PC-9 (cell line): ENCODE measurements at regions of chr1 and their contacts with region 1.

Region 1: DNA sequence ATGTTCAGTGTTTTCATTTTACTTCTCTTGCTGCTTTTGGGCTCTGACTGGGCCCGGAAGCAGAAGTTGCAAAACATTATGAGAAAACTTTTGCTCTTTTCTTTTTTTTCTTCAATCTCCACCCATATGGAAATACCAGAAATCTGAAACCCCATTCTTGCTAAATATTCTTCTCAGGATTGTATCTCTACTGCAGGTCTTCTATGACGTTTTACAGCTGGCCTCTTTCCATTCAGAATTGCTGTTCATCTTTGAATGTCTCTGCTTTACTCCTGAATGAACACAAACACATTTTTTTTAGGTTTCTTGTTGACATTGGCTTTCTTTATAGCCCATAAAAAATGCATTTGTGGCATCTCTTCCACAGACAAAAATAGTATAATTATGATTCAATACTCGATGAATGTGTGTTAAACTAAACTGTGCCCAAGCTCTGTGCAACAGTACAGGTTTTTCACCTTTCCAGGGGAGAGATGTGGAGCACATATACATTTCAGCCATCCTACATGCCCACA is 18.8 kb downstream of the PTPRC start:
- DNase-seq: peak; percentile 45 to 93
- H3K4me3 ChIP-seq: no peak overlapping the region
- H3K27ac ChIP-seq: peak overlapping the region; percentile 70
- H3K4me1 ChIP-seq: peaks cover 28% of the 10 kb centered on the region
- H3K27me3 ChIP-seq: no peaks in the 10 kb centered on the region
- CTCF ChIP-seq: no peak

Region 2: GRCh38 chr1:197948926-197949899 is 708.4 kb before region 1 on chr1:
- CTCF ChIA-PET with region 1: no interaction called
- POLR2A ChIA-PET with region 1: no interaction called
- intact Hi-C with region 1: no loop called
- DNase-seq: no peak
- H3K4me3 ChIP-seq: no peak overlapping the region
- H3K27ac ChIP-seq: no peak overlapping the region
- H3K4me1 ChIP-seq: no peaks in the 10 kb centered on the region
- H3K27me3 ChIP-seq: no peaks in the 10 kb centered on the region
- CTCF ChIP-seq: no peak

Region 3: GRCh38 chr1:198253668-198254067 is 403.9 kb before region 1 on chr1:
- CTCF ChIA-PET with region 1: no interaction called
- POLR2A ChIA-PET with region 1: interaction called, 13 read pairs
- intact Hi-C with region 1: no loop called
- DNase-seq: no peak
- H3K4me3 ChIP-seq: no peak overlapping the region
- H3K27ac ChIP-seq: no peak overlapping the region; the same call in 1 of the 2 replicates
- H3K4me1 ChIP-seq: no peaks in the 10 kb centered on the region
- H3K27me3 ChIP-seq: no peaks in the 10 kb centered on the region
- CTCF ChIP-seq: no peak

Region 4: GRCh38 chr1:198497346-198498102 is 160.1 kb before region 1 on chr1:
- CTCF ChIA-PET with region 1: no interaction called
- POLR2A ChIA-PET with region 1: interaction called, 4 read pairs
- intact Hi-C with region 1: loop called (anchors 1 kb)
- DNase-seq: no peak
- H3K4me3 ChIP-seq: no peak overlapping the region
- H3K27ac ChIP-seq: 0 out of 2 replicates have a peak overlapping the region, but pooled peaks have one; percentile 10
- H3K4me1 ChIP-seq: peaks cover 41% of the 10 kb centered on the region
- H3K27me3 ChIP-seq: no peaks in the 10 kb centered on the region
- CTCF ChIP-seq: no peak

Region 5: GRCh38 chr1:198606020-198606438 is 51.6 kb before region 1 on chr1:
- CTCF ChIA-PET with region 1: no interaction called
- POLR2A ChIA-PET with region 1: interaction called, 9 read pairs
- intact Hi-C with region 1: loop called (anchors 5 kb)
- DNase-seq: no peak
- H3K4me3 ChIP-seq: no peak overlapping the region
- H3K27ac ChIP-seq: no peak overlapping the region
- H3K4me1 ChIP-seq: no peaks in the 10 kb centered on the region
- H3K27me3 ChIP-seq: no peaks in the 10 kb centered on the region
- CTCF ChIP-seq: no peak

Region 6: GRCh38 chr1:198677027-198677426 is 19.4 kb after region 1 on chr1:
- CTCF ChIA-PET with region 1: no interaction called
- POLR2A ChIA-PET with region 1: interaction called, 21 read pairs
- intact Hi-C with region 1: loop called (anchors 1 kb)
- DNase-seq: no peak
- H3K4me3 ChIP-seq: no peak overlapping the region
- H3K27ac ChIP-seq: no peak overlapping the region
- H3K4me1 ChIP-seq: peaks cover 15% of the 10 kb centered on the region
- H3K27me3 ChIP-seq: no peaks in the 10 kb centered on the region
- CTCF ChIP-seq: no peak